OCI-LY7 (cell line): ENCODE measurements at regions of chr12 and their contacts with region 1.

Region 1: DNA sequence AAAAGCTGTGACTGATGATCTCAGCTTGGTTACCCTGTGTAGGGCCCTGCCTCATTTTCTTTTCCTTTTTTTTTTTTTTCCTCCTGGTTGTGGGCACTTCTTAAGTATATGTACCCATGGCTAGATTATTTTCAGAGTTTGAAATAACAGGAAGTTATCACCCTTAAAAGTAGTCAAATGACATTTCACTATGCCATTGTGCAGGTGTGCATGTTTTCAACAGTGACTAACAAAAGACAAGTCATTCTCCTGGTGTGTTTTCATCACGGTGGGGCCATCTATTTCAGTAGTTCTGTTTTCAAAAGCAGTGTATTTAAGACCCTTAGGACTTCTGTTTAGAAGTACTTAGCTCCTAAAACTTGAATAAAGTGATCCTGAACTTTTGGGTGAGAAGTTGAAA is 15.0 kb downstream of the GABARAPL1 start:
- DNase-seq: peak; percentile 92
- H3K4me3 ChIP-seq: peak overlapping the region; percentile 54
- H3K27ac ChIP-seq: peak overlapping the region; percentile 96
- H3K4me1 ChIP-seq: peaks cover 37% of the 10 kb centered on the region
- CTCF ChIP-seq: no peak

Region 2: GRCh38 chr12:9827209-9827888 is 400.3 kb before region 1 on chr12 and contains the start of gene KLRF1:
- CTCF ChIA-PET with region 1: no interaction called
- POLR2A ChIA-PET with region 1: no interaction called
- intact Hi-C with region 1: no loop called
- DNase-seq: no peak
- H3K4me3 ChIP-seq: no peak within 1 kb of the TSS
- H3K27ac ChIP-seq: no peak within 1 kb of the TSS
- H3K4me1 ChIP-seq: no peaks in the 10 kb centered on the region
- CTCF ChIP-seq: no peak
- total RNA-seq, gene KLRF1: not detected in 2 replicates

Region 3: DNA sequence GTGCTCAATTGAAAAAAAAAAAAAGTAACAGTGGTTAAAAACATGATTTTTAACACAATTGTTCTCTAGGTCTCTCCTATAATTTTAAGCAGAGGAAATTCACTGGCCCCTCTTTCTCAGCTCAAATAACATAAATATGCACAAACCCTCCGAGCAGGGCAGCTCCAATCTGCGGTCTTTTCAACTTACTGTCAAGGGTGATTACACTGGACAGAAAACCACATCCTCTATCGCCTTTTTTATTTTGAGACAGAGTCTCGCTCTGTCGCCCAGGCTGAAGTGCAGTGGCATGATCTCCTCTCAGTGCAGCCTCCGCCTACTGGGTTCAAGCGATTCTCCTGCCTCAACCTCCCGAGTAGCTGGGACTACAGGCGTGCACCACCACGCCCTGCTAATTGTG is 31.4 kb before region 1 on chr12:
- CTCF ChIA-PET with region 1: no interaction called
- POLR2A ChIA-PET with region 1: interaction called, 34 read pairs
- intact Hi-C with region 1: no loop called
- DNase-seq: peak; percentile 94
- H3K4me3 ChIP-seq: peak overlapping the region; percentile 49
- H3K27ac ChIP-seq: peak overlapping the region; percentile 81
- H3K4me1 ChIP-seq: peaks cover 55% of the 10 kb centered on the region
- CTCF ChIP-seq: no peak

Region 4: GRCh38 chr12:10212201-10213131 is 15.2 kb before region 1 on chr12 and contains the start of gene GABARAPL1:
- CTCF ChIA-PET with region 1: no interaction called
- POLR2A ChIA-PET with region 1: interaction called, 47 read pairs
- intact Hi-C with region 1: loop called (anchors 1 kb)
- DNase-seq: peak; percentile 79
- H3K4me3 ChIP-seq: peak within 1 kb of the TSS; percentile 98
- H3K27ac ChIP-seq: peak within 1 kb of the TSS; percentile 86
- H3K4me1 ChIP-seq: peaks cover 21% of the 10 kb centered on the region
- CTCF ChIP-seq: no peak
- total RNA-seq, gene GABARAPL1: 34.2 and 40.7 TPM in 2 replicates

Region 5: GRCh38 chr12:10243818-10244520 is 16.3 kb after region 1 on chr12:
- CTCF ChIA-PET with region 1: interaction called, 4 read pairs
- POLR2A ChIA-PET with region 1: interaction called, 37 read pairs
- intact Hi-C with region 1: no loop called
- DNase-seq: peak; percentile 91
- H3K4me3 ChIP-seq: peak overlapping the region; percentile 60
- H3K27ac ChIP-seq: peak overlapping the region; percentile 82
- H3K4me1 ChIP-seq: peaks cover 74% of the 10 kb centered on the region
- CTCF ChIP-seq: no peak